Activated T-helper 2 cell treated with anti-CD3 and anti-CD28 coated beads, Interferon-gamma antibody, Interleukin-2, Interleukin-4, amounts not matched to agents 10 μg/mL and 5 μg/mL and 100 μg/mL, durations not matched to agents 14 hours and 24 hours and 36 hours (primary cell): ENCODE measurements at regions of chr1 and their contacts with region 1.

Region 1: GRCh38 chr1:155277070-155277895 is at the start of gene HCN3:
- DNase-seq: peak; percentile 89
- H3K4me3 Mint-ChIP-seq: peak within 1 kb of the TSS; percentile 79
- H3K27ac Mint-ChIP-seq: peak within 1 kb of the TSS; percentile 58
- H3K4me1 Mint-ChIP-seq: peaks cover 30% of the 10 kb centered on the region
- H3K27me3 Mint-ChIP-seq: no peaks in the 10 kb centered on the region
- total RNA-seq, gene HCN3: 4.8 and 5.4 TPM in 2 replicates

Region 2: DNA sequence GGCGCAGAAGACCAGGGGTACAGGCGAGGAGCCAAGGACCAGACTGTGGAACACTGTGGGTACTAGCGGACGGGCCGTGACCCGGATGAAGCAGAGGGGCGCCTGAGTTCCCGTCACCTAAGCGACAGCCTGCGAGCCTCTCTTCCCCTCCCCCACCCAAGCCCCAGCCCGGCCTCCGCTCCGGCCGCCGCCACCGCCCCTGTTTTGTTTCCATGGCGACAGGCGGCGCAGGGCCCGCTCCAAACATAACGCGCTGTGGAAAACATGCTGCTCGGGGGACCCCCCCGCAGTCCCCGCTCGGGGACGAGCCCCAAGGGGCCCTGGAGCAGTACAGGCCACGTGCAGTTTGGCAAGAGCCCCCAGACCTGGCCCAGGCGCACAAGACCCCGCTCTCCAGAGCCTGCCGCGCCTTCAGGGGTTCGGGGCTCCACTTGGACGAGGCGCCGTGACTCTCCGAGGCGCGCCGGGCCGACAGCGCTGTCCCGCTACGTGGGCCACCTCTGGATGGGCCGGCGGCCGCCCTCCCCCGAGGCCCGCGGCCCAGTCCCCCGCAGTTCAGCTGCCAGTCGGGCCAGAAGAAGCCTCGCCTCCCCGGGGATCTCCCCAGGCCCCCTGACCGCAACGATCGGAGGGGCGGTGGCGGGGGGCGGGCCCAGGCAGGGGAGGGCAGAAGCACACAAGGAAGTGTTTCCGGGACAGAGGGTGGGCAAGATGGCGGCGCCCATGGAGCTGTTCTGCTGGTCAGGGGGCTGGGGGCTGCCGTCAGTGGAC is 68.6 kb before region 1 on chr1 and contains the start of gene MTX1:
- intact Hi-C with region 1: loop called (anchors 5 kb)
- DNase-seq: peak; percentile 84
- H3K4me3 Mint-ChIP-seq: peak within 1 kb of the TSS; percentile 92
- H3K27ac Mint-ChIP-seq: peak within 1 kb of the TSS; percentile 87
- H3K4me1 Mint-ChIP-seq: peaks cover 24% of the 10 kb centered on the region
- H3K27me3 Mint-ChIP-seq: no peaks in the 10 kb centered on the region
- total RNA-seq, gene MTX1: 58.6 and 64.0 TPM in 2 replicates

Region 3: GRCh38 chr1:155250633-155251449 is 26.4 kb before region 1 on chr1:
- intact Hi-C with region 1: loop called (anchors 2 kb)
- DNase-seq: peak; percentile 91
- H3K4me3 Mint-ChIP-seq: peak overlapping the region; percentile 58
- H3K27ac Mint-ChIP-seq: no peak overlapping the region
- H3K4me1 Mint-ChIP-seq: peaks cover 23% of the 10 kb centered on the region
- H3K27me3 Mint-ChIP-seq: no peaks in the 10 kb centered on the region

Region 4: DNA sequence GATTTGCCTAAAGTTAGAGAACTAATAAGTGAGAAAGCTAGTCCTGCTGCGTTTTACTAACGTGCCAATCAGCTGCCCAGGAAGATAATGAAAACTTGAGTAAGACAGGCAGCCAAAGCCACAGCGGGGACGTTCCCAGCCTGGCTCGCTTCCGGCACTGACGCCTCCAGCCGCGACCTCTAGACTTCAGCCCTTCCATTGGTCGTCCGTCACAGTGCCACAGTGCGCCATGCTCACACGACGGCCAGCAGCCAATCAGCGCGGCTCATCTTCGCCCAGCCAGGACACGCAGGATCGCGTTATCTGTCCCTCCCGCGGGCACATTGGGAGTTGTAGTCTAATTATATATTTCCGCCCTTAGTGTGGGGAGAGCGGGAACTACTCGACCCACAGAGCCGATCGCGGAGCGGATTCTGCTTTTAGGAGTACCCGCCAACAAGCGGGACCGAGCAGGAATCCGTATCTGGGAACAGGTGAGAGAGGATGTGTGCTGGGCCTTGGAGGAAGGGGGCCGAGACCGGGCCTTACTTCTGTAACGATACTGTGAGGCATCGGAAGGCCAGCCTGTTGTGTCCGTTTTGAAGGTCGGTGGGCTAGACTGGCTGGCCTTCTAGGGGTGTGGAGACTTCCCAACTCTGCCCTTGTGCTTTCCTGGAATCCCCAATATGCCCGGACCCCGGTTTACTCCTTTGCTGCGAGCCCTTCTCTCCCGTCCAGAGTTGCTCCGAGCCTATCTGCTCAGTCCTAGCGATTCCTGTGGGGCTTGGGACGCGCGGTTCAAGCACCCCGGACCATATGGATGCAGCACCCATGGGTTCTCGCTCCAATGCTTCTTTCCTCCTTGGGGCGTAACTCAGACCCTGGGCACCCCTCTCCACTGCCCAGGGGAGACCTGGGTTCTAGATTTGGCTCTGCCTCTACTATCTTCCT is 31.5 kb after region 1 on chr1 and contains the start of gene FDPS:
- intact Hi-C with region 1: loop called (anchors 2 kb)
- DNase-seq: peak; percentile 98
- H3K4me3 Mint-ChIP-seq: peak within 1 kb of the TSS; percentile 98
- H3K27ac Mint-ChIP-seq: peak within 1 kb of the TSS; percentile 97
- H3K4me1 Mint-ChIP-seq: peaks cover 38% of the 10 kb centered on the region
- H3K27me3 Mint-ChIP-seq: no peaks in the 10 kb centered on the region
- total RNA-seq, gene FDPS: 342 and 361 TPM in 2 replicates

Region 5: GRCh38 chr1:155744711-155745283 is 467.5 kb after region 1 on chr1:
- intact Hi-C with region 1: loop called (anchors 10 kb)
- DNase-seq: no peak
- H3K4me3 Mint-ChIP-seq: peak overlapping the region; percentile 86
- H3K27ac Mint-ChIP-seq: peak overlapping the region; percentile 88
- H3K4me1 Mint-ChIP-seq: no peaks in the 10 kb centered on the region
- H3K27me3 Mint-ChIP-seq: no peaks in the 10 kb centered on the region